Breast epithelium (tissue), 4 donors: ENCODE measurements at regions of chr17 and their contacts with region 1.

Region 1: GRCh38 chr17:2399572-2400473 is 1.0 kb downstream of the MNT start:
- DNase-seq: peak; percentile 96 to 97
- H3K4me3 ChIP-seq: peak overlapping the region; percentile 99
- H3K27ac ChIP-seq: peak overlapping the region; percentile 99
- H3K4me1 ChIP-seq: peaks cover 13 to 44% of the 10 kb centered on the region in 2 donors
- H3K27me3 ChIP-seq: no peaks in the 10 kb centered on the region
- CTCF ChIP-seq: no peak
- POLR2A ChIP-seq: peak; percentile 88

Region 2: GRCh38 chr17:2624292-2624731 is 224.5 kb after region 1 on chr17:
- intact Hi-C with region 1: no loop called
- DNase-seq: no peak
- H3K4me3 ChIP-seq: no peak overlapping the region
- H3K27ac ChIP-seq: no peak overlapping the region
- H3K4me1 ChIP-seq: no peaks in the 10 kb centered on the region
- H3K27me3 ChIP-seq: no peaks in the 10 kb centered on the region
- CTCF ChIP-seq: no peak
- POLR2A ChIP-seq: no peak

Region 3: DNA sequence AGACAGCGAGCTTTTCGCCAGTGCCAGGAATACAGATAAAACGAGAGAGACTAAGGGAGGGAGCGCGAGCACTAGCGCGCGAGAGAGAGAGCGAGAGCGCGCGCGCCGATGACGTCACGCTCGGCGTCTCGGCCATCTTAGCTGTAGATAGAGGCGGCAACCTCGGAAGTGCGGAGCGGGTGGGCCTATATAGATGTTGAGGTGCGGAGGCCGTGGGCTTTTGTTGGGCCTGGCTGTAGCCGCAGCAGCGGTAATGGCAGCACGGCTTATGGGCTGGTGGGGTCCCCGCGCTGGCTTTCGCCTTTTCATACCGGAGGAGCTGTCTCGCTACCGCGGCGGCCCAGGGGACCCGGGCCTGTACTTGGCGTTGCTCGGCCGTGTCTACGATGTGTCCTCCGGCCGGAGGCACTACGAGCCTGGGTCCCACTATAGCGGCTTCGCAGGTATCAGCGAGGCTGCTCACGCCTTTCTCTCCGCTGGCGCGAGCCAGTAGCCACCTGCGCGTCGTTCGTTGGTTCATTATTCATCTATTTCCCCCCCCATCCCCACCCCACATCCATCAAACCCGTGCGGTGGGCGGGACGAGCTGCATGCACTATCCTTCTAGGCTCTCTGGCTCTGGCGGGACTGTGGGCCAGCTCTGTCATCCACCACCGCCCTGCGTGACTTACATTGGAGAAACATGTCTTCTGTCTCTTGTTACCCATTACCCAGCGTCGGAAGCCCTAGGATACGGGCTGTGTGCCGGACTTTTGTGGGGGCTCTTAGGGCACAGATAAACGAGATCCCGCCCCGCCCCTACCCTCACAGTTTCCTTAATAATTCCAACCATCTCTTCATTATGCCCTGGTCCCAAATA is 1744.0 kb after region 1 on chr17:
- intact Hi-C with region 1: loop called (anchors 10 kb)
- DNase-seq: peak; percentile 88 to 92
- H3K4me3 ChIP-seq: peak overlapping the region; percentile 78 to 94 (median 85)
- H3K27ac ChIP-seq: peak overlapping the region; percentile 98 to 100
- H3K4me1 ChIP-seq: peaks cover 7 to 10% of the 10 kb centered on the region in 2 donors
- H3K27me3 ChIP-seq: no peaks in the 10 kb centered on the region
- CTCF ChIP-seq: peak in 1 of 3 donors; percentile 5
- POLR2A ChIP-seq: peak; percentile 75